Left ventricle myocardium superior (tissue), 1 donor: ENCODE measurements at regions of chr10 and their contacts with region 1.

Region 1: GRCh38 chr10:79487296-79488194 is 24.8 kb upstream of the EIF5AL1 start:
- DNase-seq: peak; percentile 58
- ATAC-seq: peak; percentile 48

Region 2: GRCh38 chr10:79374312-79375191 is 113.0 kb before region 1 on chr10:
- intact Hi-C with region 1: loop called (anchors 5 kb)
- DNase-seq: peak; percentile 86
- ATAC-seq: peak; percentile 60